Activated T-helper 2 cell treated with anti-CD3 and anti-CD28 coated beads, Interferon-gamma antibody, Interleukin-2, Interleukin-4, amounts not matched to agents 10 μg/mL and 5 μg/mL and 100 μg/mL, durations not matched to agents 14 hours and 24 hours and 36 hours (primary cell): ENCODE measurements at regions of chr12 and their contacts with region 1.

Region 1: GRCh38 chr12:124774462-124775167 is 89.0 kb downstream of the SCARB1 start:
- DNase-seq: peak; percentile 77
- H3K4me3 Mint-ChIP-seq: peak overlapping the region; percentile 53
- H3K27ac Mint-ChIP-seq: peak overlapping the region; percentile 75
- H3K4me1 Mint-ChIP-seq: peaks cover 30% of the 10 kb centered on the region
- H3K27me3 Mint-ChIP-seq: peaks cover 19% of the 10 kb centered on the region

Region 2: GRCh38 chr12:124545508-124546418 is 228.9 kb before region 1 on chr12:
- intact Hi-C with region 1: loop called (anchors 1 kb)
- DNase-seq: peak; percentile 54
- H3K4me3 Mint-ChIP-seq: peak overlapping the region; percentile 42
- H3K27ac Mint-ChIP-seq: no peak overlapping the region
- H3K4me1 Mint-ChIP-seq: peaks cover 41% of the 10 kb centered on the region
- H3K27me3 Mint-ChIP-seq: no peaks in the 10 kb centered on the region

Region 3: DNA sequence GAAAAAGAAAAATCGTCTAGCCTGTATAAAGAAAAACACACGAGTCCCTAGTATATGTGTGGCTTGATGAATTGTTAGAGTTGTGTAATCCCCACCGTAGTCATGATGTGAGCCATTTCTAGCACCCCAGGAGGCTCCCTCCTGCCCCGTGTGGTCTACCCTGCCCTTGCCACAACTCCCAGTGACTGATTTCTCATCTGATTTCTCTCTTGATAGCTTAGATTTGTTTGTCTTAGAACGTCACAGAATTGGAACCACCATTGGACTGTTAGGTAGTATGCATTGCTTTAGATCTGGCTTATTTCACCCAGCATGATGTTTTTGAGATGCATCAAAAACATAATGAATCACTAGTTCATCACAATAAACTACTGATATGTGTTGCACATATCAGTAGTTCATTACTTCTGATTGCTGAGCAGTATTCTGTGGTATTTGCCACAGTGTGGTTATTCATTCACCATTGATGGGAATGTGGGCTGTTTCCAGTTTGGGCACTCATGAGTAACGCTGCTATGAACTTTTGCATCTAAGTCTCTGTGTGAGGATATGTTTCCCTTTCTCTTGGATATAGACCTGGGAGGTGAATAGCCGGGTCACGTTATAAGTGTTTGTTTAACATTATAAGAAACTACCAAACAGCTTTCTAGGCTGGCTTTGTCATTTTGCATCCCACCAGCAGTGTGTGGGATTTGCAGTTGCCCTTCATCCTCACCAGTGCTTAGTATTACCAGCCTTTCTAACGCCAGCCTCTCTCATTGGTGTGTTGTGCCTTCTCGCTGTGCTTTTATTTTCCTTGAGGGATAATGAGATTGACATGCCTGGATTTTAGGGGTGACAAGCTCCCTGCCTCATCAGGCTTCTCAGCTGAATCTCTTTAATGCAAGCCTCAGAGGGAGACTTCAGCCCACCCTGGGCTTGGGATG is 175.3 kb before region 1 on chr12:
- intact Hi-C with region 1: loop called (anchors 1 kb)
- DNase-seq: no peak
- H3K4me3 Mint-ChIP-seq: no peak overlapping the region
- H3K27ac Mint-ChIP-seq: peak overlapping the region; percentile 20
- H3K4me1 Mint-ChIP-seq: peaks cover 8% of the 10 kb centered on the region
- H3K27me3 Mint-ChIP-seq: peaks cover 41% of the 10 kb centered on the region

Region 4: GRCh38 chr12:124720004-124720680 is 54.5 kb before region 1 on chr12:
- intact Hi-C with region 1: no loop called
- DNase-seq: no peak
- H3K4me3 Mint-ChIP-seq: no peak overlapping the region
- H3K27ac Mint-ChIP-seq: no peak overlapping the region
- H3K4me1 Mint-ChIP-seq: no peaks in the 10 kb centered on the region
- H3K27me3 Mint-ChIP-seq: peaks cover 16% of the 10 kb centered on the region

Region 5: DNA sequence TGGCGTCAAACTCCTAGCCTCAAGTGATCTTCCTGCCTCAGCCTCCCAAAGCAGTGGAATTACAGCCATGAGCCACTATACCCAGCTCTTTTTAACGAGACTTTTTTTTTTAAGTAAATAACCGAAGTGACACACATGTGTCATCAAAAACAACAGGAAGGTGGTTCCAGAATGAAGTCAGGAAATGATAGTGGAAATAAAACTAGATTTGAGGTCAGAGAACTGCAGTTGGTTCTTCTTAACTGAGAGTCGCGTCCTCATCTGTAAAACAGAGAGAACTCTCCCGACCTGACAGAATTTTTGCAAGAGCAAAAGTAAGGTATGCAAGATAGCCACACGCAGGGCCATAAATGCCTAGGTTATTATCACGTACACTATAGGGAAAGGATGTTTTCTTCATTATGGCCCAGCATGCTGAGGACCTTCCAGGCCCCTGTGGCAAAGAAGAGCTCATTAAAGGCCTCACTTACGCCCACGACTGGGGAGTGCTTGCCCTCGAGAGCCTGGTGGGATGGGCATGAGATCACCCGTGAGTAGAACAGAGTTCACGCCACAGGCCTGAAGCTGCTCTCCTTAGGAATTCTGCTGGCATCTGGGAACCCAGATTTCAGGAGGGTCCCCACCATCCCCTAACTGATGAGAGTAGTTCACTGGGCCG is 21.8 kb after region 1 on chr12:
- intact Hi-C with region 1: loop called (anchors 1 kb)
- DNase-seq: no peak
- H3K4me3 Mint-ChIP-seq: no peak overlapping the region
- H3K27ac Mint-ChIP-seq: peak overlapping the region; percentile 39
- H3K4me1 Mint-ChIP-seq: peaks cover 20% of the 10 kb centered on the region
- H3K27me3 Mint-ChIP-seq: no peaks in the 10 kb centered on the region

Region 6: DNA sequence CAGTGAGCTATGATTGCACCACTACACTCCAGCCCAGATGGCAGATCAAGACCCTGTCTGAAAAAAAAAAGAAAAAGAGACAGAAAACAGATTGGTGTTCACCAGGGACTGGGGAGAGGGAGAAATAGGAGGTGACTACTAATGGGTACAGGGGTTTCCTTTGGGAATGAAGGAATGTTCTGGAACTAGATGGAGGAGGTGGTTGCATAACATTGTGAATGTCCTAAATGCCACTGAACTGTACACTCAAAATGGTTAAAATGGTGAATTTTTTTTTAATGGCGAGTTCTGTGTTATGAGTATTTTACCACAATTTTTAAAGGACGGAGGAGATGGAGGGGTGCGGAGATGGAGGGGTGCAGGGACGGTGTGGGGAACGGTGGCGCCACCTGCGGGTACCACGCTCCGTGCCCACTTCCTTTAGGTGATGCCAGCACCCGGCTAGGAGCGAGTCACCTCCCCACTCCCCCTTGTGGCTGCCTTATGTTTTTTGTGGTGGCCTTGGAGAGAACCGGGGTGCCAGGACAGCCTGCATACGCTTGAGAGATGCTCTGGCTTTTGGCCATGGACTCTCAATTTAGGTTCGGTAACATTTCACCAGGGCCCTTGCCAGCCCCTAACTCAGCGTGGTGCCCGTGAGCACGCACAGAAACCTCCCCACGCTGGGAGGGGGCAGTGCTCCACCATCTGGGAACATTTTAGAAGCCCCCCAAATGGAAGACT is 123.7 kb after region 1 on chr12:
- intact Hi-C with region 1: loop called (anchors 2 kb)
- DNase-seq: peak; percentile 42
- H3K4me3 Mint-ChIP-seq: no peak overlapping the region
- H3K27ac Mint-ChIP-seq: no peak overlapping the region
- H3K4me1 Mint-ChIP-seq: peaks cover 15% of the 10 kb centered on the region
- H3K27me3 Mint-ChIP-seq: peaks cover 2% of the 10 kb centered on the region

Region 7: DNA sequence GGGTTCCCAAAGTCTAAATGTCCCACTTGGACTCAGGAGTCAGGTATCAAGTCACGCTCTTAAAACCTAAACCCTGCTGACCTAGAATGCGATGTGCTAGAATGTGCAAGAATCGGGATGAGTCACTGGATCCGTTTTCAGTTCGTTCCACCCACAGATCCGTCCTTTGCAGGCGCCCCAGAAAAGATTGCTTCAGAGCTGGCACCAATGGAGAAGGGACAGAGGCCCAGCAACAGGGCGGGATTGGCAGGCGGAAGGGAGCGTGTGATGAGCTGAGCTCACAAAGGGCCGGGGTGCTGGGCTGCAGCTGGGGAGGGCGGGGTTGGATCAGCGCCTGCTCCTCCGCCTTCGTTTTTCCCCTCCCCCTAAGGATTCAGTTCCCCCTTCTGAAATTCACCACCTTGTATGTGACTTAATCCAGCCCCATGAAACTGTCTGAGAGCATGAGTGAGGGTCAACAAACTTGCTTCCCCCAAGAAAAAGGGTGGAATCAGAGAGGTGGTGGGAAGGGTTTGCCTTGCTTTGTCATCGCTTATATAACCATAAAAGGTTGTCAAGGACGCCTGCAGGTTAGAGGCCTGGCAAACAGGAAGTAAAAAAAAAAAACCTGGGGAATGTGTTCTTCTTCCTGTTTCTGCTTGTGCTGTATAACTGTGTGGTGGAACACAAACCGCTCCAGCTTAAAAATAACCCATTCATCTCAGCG is 142.7 kb after region 1 on chr12:
- intact Hi-C with region 1: loop called (anchors 1 kb)
- DNase-seq: peak; percentile 93
- H3K4me3 Mint-ChIP-seq: peak overlapping the region; percentile 86
- H3K27ac Mint-ChIP-seq: peak overlapping the region; percentile 98
- H3K4me1 Mint-ChIP-seq: peaks cover 69% of the 10 kb centered on the region
- H3K27me3 Mint-ChIP-seq: no peaks in the 10 kb centered on the region